Activated naive CD4-positive, alpha-beta T cell treated with anti-CD3 and anti-CD28 coated beads for 36 hours (primary cell): ENCODE measurements at regions of chr1 and their contacts with region 1.

Region 1: DNA sequence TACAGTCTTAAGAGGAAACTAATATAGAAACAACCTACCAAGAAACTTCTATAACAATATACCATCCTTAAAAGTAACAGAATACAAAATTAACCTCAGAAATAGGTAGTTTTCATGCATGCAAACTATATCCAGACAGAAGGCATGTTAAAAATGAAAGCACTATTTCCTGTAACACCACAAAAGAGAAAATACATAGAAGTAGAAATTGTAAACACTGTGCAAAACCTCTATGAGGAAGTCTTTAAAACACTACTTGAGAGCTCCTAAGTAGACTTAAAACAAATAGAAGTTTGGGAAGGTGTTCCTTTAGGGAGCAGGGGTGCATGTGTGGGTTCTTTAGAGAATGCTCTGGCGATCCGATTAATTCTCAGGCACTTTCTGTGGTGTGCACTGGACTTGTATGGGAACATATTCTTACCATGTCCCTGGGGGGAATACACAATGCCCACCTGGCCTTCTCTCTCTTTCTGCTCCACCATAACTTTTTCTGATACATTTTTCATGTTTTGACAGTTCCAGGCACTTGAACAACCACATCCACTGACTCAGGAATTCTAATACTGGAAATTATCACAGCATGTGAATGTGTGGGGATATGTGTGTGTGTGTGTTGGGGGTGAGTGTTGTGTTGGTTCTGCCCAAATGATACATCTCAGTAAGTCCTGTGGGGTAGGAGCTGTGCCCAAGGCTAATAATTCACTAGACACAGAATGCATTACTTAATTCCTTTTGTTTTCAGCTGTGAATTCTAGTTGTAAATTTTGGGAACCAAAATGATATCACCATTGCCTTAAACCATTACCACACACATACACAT is 866.3 kb upstream of the B3GALT2 start:
- DNase-seq: no peak
- H3K4me3 Mint-ChIP-seq: peak overlapping the region; percentile 55
- H3K27ac Mint-ChIP-seq: peak overlapping the region; percentile 81
- H3K4me1 Mint-ChIP-seq: peaks cover 59% of the 10 kb centered on the region
- H3K27me3 Mint-ChIP-seq: no peaks in the 10 kb centered on the region

Region 2: DNA sequence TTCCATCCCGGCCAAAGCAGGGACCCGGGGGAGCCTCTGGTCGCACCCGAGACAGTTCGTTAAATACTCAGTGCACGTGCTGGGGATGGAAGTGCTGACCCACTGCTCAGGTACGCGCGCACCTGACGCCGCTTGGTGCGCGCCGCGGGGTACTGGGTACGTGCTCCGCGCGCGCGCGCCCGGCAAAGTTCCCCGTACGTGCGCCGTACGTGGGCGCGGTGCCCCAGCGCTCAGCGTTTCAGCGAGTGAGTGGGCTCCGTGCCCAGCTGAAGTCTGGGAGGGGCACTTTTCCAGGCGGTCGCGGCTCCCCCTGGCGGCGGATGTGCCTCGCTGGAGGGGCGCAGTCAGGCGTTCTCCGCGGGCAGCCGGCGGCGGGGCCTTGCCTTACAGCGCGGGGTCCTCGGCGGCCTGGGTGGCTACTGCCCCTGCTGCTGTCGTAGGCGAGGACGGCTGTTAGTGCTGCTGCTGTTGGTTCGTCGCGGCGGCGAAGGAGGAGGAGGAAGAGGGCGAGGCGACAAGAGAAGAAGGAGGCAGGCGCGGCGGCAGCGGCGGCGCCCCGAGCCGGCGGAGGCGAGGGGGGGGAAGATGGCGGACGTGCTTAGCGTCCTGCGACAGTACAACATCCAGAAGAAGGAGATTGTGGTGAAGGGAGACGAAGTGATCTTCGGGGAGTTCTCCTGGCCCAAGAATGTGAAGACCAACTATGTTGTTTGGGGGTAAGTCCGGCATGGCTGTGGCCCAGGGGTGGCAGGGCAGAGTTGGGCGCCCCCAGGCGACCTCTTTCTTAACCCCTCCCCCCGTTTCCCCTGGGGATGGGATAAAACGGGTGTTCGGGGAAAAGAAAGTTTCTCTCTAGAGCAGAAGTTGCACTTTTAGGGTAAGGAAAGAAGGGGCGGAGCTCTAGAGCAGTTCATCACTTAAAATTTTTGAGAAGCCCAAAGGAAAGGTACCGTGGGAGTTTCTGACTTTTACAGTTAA is 930.8 kb before region 1 on chr1 and contains the start of gene CDC73:
- CTCF ChIA-PET with region 1: no interaction called
- intact Hi-C with region 1: loop called (anchors 5 kb)
- DNase-seq: peak; percentile 97
- H3K4me3 Mint-ChIP-seq: peak within 1 kb of the TSS; percentile 92
- H3K27ac Mint-ChIP-seq: peak within 1 kb of the TSS; percentile 92
- H3K4me1 Mint-ChIP-seq: peaks cover 43% of the 10 kb centered on the region
- H3K27me3 Mint-ChIP-seq: peaks cover 1% of the 10 kb centered on the region
- total RNA-seq, gene CDC73: 39.0 to 45.2 TPM

Region 3: DNA sequence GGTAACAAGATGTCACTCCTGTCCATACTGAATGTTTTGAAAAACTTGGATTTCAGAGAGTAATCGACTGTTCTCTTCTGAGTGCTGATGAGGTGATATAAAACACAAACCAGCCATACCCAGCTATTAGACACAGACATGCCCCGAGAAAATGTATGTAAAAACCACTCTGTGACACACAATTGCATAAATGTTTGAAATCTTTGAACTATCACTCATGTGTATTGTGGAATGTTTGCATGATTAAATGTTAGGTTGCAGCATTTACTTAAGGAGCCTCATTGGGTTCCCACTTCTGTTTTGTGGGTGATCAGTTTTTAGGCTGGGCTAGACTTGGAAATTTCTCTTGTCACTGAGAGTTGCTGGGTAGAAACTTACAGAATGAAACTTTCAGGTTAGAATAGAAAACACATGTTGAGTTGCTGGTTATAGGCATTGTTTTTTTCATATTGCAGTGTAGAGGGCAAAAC is 595.9 kb before region 1 on chr1:
- CTCF ChIA-PET with region 1: no interaction called
- intact Hi-C with region 1: loop called (anchors 5 kb)
- DNase-seq: no peak
- H3K4me3 Mint-ChIP-seq: no peak overlapping the region
- H3K27ac Mint-ChIP-seq: no peak overlapping the region
- H3K4me1 Mint-ChIP-seq: peaks cover 23% of the 10 kb centered on the region
- H3K27me3 Mint-ChIP-seq: no peaks in the 10 kb centered on the region

Region 4: DNA sequence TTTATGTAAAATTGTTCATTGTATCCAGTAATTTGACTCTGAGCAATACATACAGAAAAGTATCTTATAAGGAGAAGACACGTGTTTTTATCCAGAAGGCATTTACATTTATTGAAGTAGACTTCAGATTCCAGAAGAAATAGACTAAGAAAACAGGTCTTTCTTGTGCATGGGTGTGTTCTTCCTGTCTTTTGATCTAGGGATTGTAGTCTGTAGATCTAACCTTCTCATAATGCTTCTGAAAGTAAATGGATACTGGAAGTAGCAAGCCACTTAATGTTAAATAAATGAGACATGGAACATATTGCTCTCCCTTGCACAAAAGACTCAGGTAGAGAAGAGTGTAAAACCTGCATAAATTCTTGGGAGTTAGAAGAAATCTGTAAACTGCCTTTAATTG is 13.1 kb before region 1 on chr1:
- CTCF ChIA-PET with region 1: no interaction called
- intact Hi-C with region 1: no loop called
- DNase-seq: no peak
- H3K4me3 Mint-ChIP-seq: no peak overlapping the region
- H3K27ac Mint-ChIP-seq: no peak overlapping the region
- H3K4me1 Mint-ChIP-seq: peaks cover 21% of the 10 kb centered on the region
- H3K27me3 Mint-ChIP-seq: no peaks in the 10 kb centered on the region

Region 5: GRCh38 chr1:194225821-194226220 is 173.1 kb after region 1 on chr1:
- CTCF ChIA-PET with region 1: no interaction called
- intact Hi-C with region 1: loop called (anchors 5 kb)
- DNase-seq: no peak
- H3K4me3 Mint-ChIP-seq: no peak overlapping the region
- H3K27ac Mint-ChIP-seq: no peak overlapping the region
- H3K4me1 Mint-ChIP-seq: peaks cover 16% of the 10 kb centered on the region
- H3K27me3 Mint-ChIP-seq: no peaks in the 10 kb centered on the region

Region 6: GRCh38 chr1:194289569-194290266 is 237.0 kb after region 1 on chr1:
- CTCF ChIA-PET with region 1: interaction called, 3 read pairs
- intact Hi-C with region 1: loop called (anchors 1 kb)
- DNase-seq: peak; percentile 81
- H3K4me3 Mint-ChIP-seq: peak overlapping the region; percentile 54
- H3K27ac Mint-ChIP-seq: peak overlapping the region; percentile 59
- H3K4me1 Mint-ChIP-seq: peaks cover 25% of the 10 kb centered on the region
- H3K27me3 Mint-ChIP-seq: no peaks in the 10 kb centered on the region